Common myeloid progenitor, CD34-positive (primary cell): ENCODE measurements at regions of chr17 and their contacts with region 1.

Region 1: GRCh38 chr17:2380226-2380922 is 20.5 kb downstream of the MNT start:
- DNase-seq: no peak
- H3K4me3 ChIP-seq: no peak overlapping the region
- H3K27ac ChIP-seq: no peak overlapping the region
- H3K4me1 ChIP-seq: no peaks in the 10 kb centered on the region
- H3K27me3 ChIP-seq: no peaks in the 10 kb centered on the region

Region 2: DNA sequence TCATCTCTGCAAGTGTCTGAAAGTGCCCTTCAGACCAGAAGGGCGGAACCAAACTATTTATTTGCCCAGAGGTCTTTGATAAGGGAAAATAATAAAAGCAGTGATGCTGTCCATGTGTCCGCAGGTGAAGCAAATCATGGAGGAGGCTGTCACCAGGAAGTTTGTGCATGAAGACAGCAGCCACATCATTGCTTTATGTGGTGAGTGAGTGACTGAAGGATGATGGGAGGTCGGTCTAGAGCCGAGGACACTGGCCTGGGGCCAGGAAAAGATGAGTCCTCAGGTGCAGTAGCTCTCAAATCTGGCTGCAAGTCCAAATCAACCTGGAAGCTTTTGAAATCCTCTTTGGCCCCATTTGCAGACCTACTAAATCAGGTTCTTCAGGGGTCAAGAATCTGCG is 37.0 kb before region 1 on chr17:
- CTCF ChIA-PET with region 1: no interaction called
- POLR2A ChIA-PET with region 1: no interaction called
- DNase-seq: no peak
- H3K4me3 ChIP-seq: no peak overlapping the region
- H3K27ac ChIP-seq: no peak overlapping the region
- H3K4me1 ChIP-seq: peaks cover 0 to 2% (median 1%) of the 10 kb centered on the region in 4 experiments
- H3K27me3 ChIP-seq: no peaks in the 10 kb centered on the region

Region 3: GRCh38 chr17:2392252-2393173 is 12.1 kb after region 1 on chr17:
- CTCF ChIA-PET with region 1: interaction called, 41 read pairs
- POLR2A ChIA-PET with region 1: interaction called, 9 read pairs
- DNase-seq: peak; percentile 93 to 97 (median 96)
- H3K4me3 ChIP-seq: peak overlapping the region; percentile 59 to 86 (median 68)
- H3K27ac ChIP-seq: peak overlapping the region; percentile 79 to 91
- H3K4me1 ChIP-seq: peaks cover 13 to 65% (median 61%) of the 10 kb centered on the region in 4 experiments
- H3K27me3 ChIP-seq: no peaks in the 10 kb centered on the region

Region 4: GRCh38 chr17:2401426-2402221 is 21.2 kb after region 1 on chr17:
- CTCF ChIA-PET with region 1: interaction called, 49 read pairs
- POLR2A ChIA-PET with region 1: interaction called, 3 read pairs
- DNase-seq: peak; percentile 99 to 100 (median 100)
- H3K4me3 ChIP-seq: peak overlapping the region; percentile 69 to 98 (median 94)
- H3K27ac ChIP-seq: peak overlapping the region; percentile 92 to 96
- H3K4me1 ChIP-seq: peaks cover 8 to 46% (median 39%) of the 10 kb centered on the region in 4 experiments
- H3K27me3 ChIP-seq: no peaks in the 10 kb centered on the region

Region 5: DNA sequence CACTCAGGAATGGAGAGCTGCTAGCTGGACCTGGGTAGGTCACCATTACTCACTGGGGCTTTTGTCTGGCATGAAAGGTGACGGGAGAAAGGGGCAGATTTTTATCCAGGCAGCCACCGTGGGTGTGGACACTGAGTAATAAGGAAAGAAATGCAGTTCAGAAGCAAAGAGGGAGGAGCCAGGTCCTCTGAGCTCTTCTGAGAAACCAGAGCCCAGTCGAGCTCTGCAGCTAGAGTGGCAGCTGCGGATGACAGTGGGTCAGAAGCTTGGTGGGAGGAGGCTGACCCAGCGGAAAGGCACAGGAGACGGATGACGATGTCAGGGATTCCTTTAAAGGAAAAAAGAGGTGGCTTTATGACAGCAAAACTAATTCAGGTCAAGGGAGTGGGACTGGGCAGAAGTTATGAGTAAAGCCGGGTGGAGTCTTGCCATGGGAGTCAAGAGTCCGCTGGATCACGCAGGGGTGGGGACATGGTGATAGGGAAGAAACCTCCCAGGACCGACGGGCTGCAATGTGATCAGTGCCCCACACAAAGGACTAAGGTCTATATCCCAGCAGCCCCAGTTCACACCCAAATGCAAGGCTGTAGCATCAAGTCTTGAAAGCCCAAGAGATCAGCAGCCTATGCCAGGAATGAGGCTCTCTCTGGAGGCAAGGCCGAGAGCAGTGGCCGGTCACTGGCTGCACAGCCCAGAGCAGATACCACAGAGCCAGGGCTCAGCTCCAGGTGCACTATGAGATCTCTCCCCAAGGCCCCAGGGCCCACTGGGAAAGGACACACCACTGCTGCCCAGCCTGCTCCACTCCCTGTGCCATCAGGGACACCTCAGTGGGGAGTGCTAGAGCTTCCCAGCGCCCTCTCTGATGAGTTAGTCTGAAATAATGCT is 26.8 kb after region 1 on chr17:
- CTCF ChIA-PET with region 1: interaction called, 49 read pairs
- POLR2A ChIA-PET with region 1: interaction called, 3 read pairs
- DNase-seq: no peak
- H3K4me3 ChIP-seq: no peak overlapping the region
- H3K27ac ChIP-seq: no peak overlapping the region
- H3K4me1 ChIP-seq: peaks cover 0 to 12% (median 9%) of the 10 kb centered on the region in 4 experiments
- H3K27me3 ChIP-seq: no peaks in the 10 kb centered on the region

Region 6: GRCh38 chr17:2416010-2416734 is 35.8 kb after region 1 on chr17:
- CTCF ChIA-PET with region 1: interaction called, 311 read pairs
- POLR2A ChIA-PET with region 1: interaction called, 21 read pairs
- DNase-seq: peak; percentile 78 to 88 (median 82)
- H3K4me3 ChIP-seq: no peak overlapping the region
- H3K27ac ChIP-seq: no peak overlapping the region
- H3K4me1 ChIP-seq: no peaks in the 10 kb centered on the region
- H3K27me3 ChIP-seq: no peaks in the 10 kb centered on the region

Region 7: GRCh38 chr17:2435181-2435741 is 54.9 kb after region 1 on chr17:
- CTCF ChIA-PET with region 1: interaction called, 12 read pairs
- POLR2A ChIA-PET with region 1: interaction called, 4 read pairs
- DNase-seq: peak in 2 of 3 donors; percentile 21 to 33
- H3K4me3 ChIP-seq: peak overlapping the region in 1 of 7 experiments; percentile 31
- H3K27ac ChIP-seq: peak overlapping the region in 1 of 2 experiments; percentile 36
- H3K4me1 ChIP-seq: peaks cover 0 to 8% (median 0%) of the 10 kb centered on the region in 4 experiments
- H3K27me3 ChIP-seq: no peaks in the 10 kb centered on the region